ENCODE measurements at regions of chr6 and their contacts with region 1.

Region 1: DNA sequence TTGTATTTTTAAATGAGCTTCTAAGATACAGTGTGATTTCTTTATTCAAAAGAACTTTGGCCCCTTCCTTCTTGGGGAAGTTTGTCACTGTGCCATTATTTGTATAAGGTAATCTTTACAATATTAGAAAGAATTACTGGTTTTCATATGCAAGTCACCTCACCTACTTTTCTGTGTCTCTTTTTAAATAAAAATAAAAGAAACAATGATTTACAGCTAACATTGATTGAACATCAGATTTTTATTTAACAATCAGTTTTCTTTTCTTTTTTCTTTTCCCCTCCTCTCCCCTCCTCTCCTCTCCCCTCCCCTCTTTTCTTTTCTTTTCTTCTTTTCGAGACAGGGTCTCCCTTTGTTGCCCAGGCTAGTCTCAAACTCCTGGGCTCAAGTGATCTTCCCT is 46.0 kb downstream of the CDC40 start:
- DNase-seq: no peak
- ATAC-seq: no peak
- H3K4me3 ChIP-seq: no peak overlapping the region
- H3K4me3 Mint-ChIP-seq: no peak overlapping the region
- H3K27ac ChIP-seq: no peak overlapping the region
- H3K27ac Mint-ChIP-seq: no peak overlapping the region
- H3K4me1 ChIP-seq: no peaks in the 10 kb centered on the region
- H3K4me1 Mint-ChIP-seq: peaks cover 0 to 1% (median 0%) of the 10 kb centered on the region in 7 donors
- H3K27me3 ChIP-seq: no peaks in the 10 kb centered on the region
- H3K27me3 Mint-ChIP-seq: no peaks in the 10 kb centered on the region

Region 2: GRCh38 chr6:110185879-110186278 is 40.4 kb before region 1 on chr6:
- CTCF ChIA-PET with region 1: no interaction called
- POLR2A ChIA-PET with region 1: no interaction called
- intact Hi-C with region 1: loop called in 1 of 2 experiments (anchors 5 kb)
- DNase-seq: no peak
- ATAC-seq: no peak
- H3K4me3 ChIP-seq: no peak overlapping the region
- H3K4me3 Mint-ChIP-seq: peak overlapping the region in 9 of 10 donors; percentile 2 to 62 (median 42)
- H3K27ac ChIP-seq: no peak overlapping the region
- H3K27ac Mint-ChIP-seq: peak overlapping the region in 3 of 9 donors; percentile 5 to 27 (median 16)
- H3K4me1 ChIP-seq: peaks cover 19 to 31% of the 10 kb centered on the region in 2 donors
- H3K4me1 Mint-ChIP-seq: peaks cover 0 to 22% (median 16%) of the 10 kb centered on the region in 7 donors
- H3K27me3 ChIP-seq: no peaks in the 10 kb centered on the region
- H3K27me3 Mint-ChIP-seq: no peaks in the 10 kb centered on the region

Measured in naive thymus-derived CD4-positive, alpha-beta T cell (primary cell).